ENCODE measurements at regions of chr5 and their contacts with region 1.

Region 1: DNA sequence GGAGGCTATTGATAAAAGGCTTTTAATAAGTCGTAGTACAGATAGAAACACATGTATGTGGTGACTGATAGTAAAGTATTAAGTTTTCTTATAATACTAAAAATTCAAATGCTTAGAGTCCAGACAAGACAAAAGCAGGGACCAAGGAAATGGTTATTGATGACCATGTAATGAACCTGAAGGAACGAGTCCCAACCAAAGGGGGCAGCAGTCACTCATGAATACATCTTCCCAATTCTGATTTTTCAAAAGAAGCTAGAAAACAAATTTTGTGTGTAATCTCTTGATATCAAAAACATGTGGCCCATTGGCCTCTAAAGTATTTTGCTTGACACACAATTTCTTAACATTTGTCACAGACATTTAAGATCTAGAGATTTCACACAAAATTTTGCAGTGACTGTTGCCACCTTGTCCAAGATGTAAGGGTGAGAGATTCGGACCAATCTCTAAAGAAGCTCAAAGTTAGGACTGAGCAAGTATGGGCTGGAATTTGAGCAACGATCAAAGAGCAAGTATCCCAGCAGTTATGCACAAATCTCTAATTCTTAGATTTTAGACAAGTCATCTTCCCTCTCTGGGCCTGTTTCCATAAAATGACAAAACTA is 66.8 kb downstream of the ARL15 start:
- DNase-seq: no peak
- H3K4me3 ChIP-seq: no peak overlapping the region
- H3K27ac ChIP-seq: no peak overlapping the region
- H3K4me1 ChIP-seq: no peaks in the 10 kb centered on the region
- H3K27me3 ChIP-seq: no peaks in the 10 kb centered on the region
- CTCF ChIP-seq: peak; percentile 53

Region 2: DNA sequence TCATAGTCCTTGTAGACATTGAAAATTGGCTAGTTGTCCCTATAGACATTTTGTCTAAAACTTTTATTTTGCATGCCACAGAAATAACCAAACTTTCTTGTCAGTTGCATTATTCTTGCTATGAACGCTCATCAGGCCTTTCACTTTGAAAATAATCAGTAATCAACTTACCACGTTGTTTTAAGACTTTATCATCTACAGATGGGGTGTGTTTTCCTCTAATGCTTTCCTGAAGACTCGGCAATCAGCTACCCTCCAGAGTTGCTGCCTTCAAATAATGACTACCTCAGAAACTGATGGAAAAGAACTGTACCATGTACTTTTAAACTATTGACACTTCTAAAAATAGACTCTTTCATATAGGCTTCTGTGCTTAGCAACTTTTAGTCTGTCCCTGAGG is 178.4 kb after region 1 on chr5:
- intact Hi-C with region 1: loop called (anchors 5 kb)
- DNase-seq: no peak
- H3K4me3 ChIP-seq: no peak overlapping the region
- H3K27ac ChIP-seq: no peak overlapping the region
- H3K4me1 ChIP-seq: no peaks in the 10 kb centered on the region
- H3K27me3 ChIP-seq: no peaks in the 10 kb centered on the region
- CTCF ChIP-seq: no peak

Region 3: DNA sequence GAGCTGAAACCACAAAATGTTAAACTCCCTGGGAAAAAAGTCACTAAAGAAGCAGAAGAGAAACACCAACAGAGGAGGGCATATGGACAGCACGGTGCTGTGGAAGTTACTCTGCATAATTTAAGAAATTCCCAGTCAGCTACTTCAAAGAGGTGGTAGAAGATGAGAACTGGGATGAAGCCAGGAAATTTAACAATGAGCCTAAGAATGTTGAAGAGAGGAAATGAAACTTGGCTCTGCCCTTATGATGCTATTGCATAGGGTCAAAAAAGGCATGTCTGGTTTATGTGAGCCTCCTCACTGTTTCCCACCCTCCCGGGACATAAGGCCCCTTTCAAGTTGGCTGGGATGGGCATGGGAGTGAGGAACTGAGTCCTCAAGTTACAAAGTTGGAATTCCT is 248.6 kb after region 1 on chr5:
- intact Hi-C with region 1: loop called (anchors 5 kb)
- DNase-seq: no peak
- H3K4me3 ChIP-seq: no peak overlapping the region
- H3K27ac ChIP-seq: no peak overlapping the region
- H3K4me1 ChIP-seq: no peaks in the 10 kb centered on the region
- H3K27me3 ChIP-seq: no peaks in the 10 kb centered on the region
- CTCF ChIP-seq: no peak

Region 4: GRCh38 chr5:54533541-54534190 is 290.1 kb after region 1 on chr5:
- intact Hi-C with region 1: no loop called
- DNase-seq: no peak
- H3K4me3 ChIP-seq: no peak overlapping the region
- H3K27ac ChIP-seq: peak overlapping the region; percentile 3
- H3K4me1 ChIP-seq: no peaks in the 10 kb centered on the region
- H3K27me3 ChIP-seq: no peaks in the 10 kb centered on the region
- CTCF ChIP-seq: no peak

Measured in colonic mucosa (tissue), 4 donors.